Mammary epithelial cell (primary cell): ENCODE measurements at regions of chr16 and their contacts with region 1.

Region 1: DNA sequence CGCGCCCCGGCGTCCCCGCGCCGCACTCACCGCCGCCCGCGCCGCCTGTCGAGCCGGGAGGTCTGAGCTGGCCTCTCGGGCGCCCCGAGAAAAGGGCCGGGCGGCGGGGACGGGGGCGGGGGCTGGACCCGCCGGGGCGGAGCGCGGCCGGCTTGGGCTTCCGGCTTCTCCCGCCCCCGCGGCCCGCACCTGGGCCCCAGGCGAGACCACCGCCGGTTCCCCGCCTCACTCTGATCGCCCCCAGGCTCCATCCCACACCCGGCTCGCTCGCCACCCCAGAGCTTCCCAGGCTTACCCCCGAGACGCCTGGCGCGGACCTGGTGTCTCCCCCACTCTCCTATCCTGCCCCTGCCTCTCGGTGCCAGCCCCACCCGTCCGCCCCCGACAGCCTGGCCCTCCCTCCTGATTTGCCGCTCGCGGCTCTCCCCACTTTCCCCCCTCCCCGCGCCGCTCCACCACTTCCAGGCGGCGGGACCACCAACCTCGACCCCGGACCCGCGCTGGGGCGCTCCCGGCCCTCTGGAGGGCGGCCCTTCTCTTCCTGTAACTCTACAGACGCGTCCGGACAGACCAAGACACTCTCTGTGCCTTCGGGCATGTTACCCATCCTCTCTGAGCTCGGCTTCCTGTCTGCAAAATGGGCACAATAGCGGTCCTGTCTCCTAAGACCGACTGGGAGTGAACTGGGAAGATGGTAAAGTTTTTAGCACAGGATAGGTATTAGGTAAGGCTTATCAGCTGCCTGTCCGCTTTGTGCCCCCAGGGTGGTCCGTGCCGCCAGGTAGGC is at the start of gene LITAF:
- DNase-seq: peak; percentile 74
- H3K4me3 ChIP-seq: peak within 1 kb of the TSS; percentile 72 to 88 (median 84)
- H3K27ac ChIP-seq: peak within 1 kb of the TSS; percentile 83
- H3K4me1 ChIP-seq: peaks cover 30% of the 10 kb centered on the region
- H3K27me3 ChIP-seq: no peaks in the 10 kb centered on the region
- CTCF ChIP-seq: peak in 1 of 2 donors; percentile 27
- total RNA-seq, gene LITAF: 128 to 197 TPM

Region 2: GRCh38 chr16:11407047-11407982 is 179.7 kb before region 1 on chr16:
- CTCF ChIA-PET with region 1: no interaction called
- dilution Hi-C with region 1: no loop called
- in situ Hi-C with region 1: no loop called
- intact Hi-C with region 1: loop called (anchors 5 kb)
- DNase-seq: peak; percentile 65
- H3K4me3 ChIP-seq: no peak overlapping the region
- H3K27ac ChIP-seq: no peak overlapping the region
- H3K4me1 ChIP-seq: no peaks in the 10 kb centered on the region
- H3K27me3 ChIP-seq: no peaks in the 10 kb centered on the region
- CTCF ChIP-seq: peak; percentile 76 to 77

Region 3: GRCh38 chr16:11535471-11535870 is 51.6 kb before region 1 on chr16:
- CTCF ChIA-PET with region 1: no interaction called
- dilution Hi-C with region 1: no loop called
- in situ Hi-C with region 1: no loop called
- intact Hi-C with region 1: loop called (anchors 2 kb)
- DNase-seq: peak; percentile 82
- H3K4me3 ChIP-seq: no peak overlapping the region
- H3K27ac ChIP-seq: no peak overlapping the region
- H3K4me1 ChIP-seq: peaks cover 12% of the 10 kb centered on the region
- H3K27me3 ChIP-seq: no peaks in the 10 kb centered on the region
- CTCF ChIP-seq: no peak

Region 4: GRCh38 chr16:11613381-11614303 is 26.6 kb after region 1 on chr16:
- CTCF ChIA-PET with region 1: no interaction called
- dilution Hi-C with region 1: no loop called
- in situ Hi-C with region 1: no loop called
- intact Hi-C with region 1: loop called (anchors 1 kb)
- DNase-seq: peak; percentile 94
- H3K4me3 ChIP-seq: no peak overlapping the region
- H3K27ac ChIP-seq: no peak overlapping the region
- H3K4me1 ChIP-seq: peaks cover 42% of the 10 kb centered on the region
- H3K27me3 ChIP-seq: no peaks in the 10 kb centered on the region
- CTCF ChIP-seq: no peak

Region 5: GRCh38 chr16:11629071-11629962 is 42.3 kb after region 1 on chr16:
- CTCF ChIA-PET with region 1: no interaction called
- dilution Hi-C with region 1: no loop called
- in situ Hi-C with region 1: no loop called
- intact Hi-C with region 1: loop called (anchors 5 kb)
- DNase-seq: no peak
- H3K4me3 ChIP-seq: no peak overlapping the region
- H3K27ac ChIP-seq: peak overlapping the region; percentile 88
- H3K4me1 ChIP-seq: peaks cover 44% of the 10 kb centered on the region
- H3K27me3 ChIP-seq: no peaks in the 10 kb centered on the region
- CTCF ChIP-seq: no peak

Region 6: GRCh38 chr16:11667824-11668622 is 81.0 kb after region 1 on chr16 and contains the start of gene SNN:
- CTCF ChIA-PET with region 1: no interaction called
- dilution Hi-C with region 1: no loop called
- in situ Hi-C with region 1: no loop called
- intact Hi-C with region 1: no loop called
- DNase-seq: peak; percentile 79
- H3K4me3 ChIP-seq: peak within 1 kb of the TSS; percentile 65 to 90 (median 85)
- H3K27ac ChIP-seq: no peak within 1 kb of the TSS
- H3K4me1 ChIP-seq: peaks cover 49% of the 10 kb centered on the region
- H3K27me3 ChIP-seq: no peaks in the 10 kb centered on the region
- CTCF ChIP-seq: no peak
- total RNA-seq, gene SNN: 14.2 to 32.7 TPM

Region 7: DNA sequence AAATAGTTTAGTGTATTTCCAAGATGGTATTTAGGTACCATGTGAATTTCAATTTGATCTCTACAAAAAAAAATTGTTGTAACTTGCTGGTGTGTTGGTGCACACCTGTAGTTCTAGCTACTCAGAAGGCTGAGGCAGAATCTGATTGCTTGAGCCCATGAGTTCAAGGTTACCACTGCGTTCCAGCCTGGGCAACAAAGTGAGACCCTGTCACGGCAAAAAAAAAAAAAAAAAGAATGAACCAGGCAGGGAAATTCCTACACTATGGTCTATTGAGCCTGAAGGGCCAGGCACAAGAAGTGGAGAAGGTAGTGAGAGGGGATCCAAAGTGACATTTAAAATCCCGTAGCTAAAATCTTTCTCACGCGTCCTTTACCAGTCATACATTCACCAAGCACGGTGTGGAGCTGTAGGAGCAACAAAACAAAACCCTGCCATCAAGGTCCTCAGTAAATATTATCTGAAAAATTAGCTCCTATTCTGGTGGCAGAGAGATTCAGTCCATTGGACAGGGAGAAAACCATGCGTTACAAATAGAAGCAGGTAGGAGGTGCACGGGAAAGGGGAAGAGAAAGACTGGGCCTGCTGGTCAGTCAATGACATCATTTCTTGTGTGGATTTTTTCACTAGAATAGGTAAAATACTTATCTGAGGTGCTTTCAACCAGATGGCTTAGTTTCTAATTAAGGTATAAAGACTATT is 128.3 kb after region 1 on chr16:
- CTCF ChIA-PET with region 1: no interaction called
- dilution Hi-C with region 1: no loop called
- in situ Hi-C with region 1: no loop called
- intact Hi-C with region 1: loop called (anchors 10 kb)
- DNase-seq: no peak
- H3K4me3 ChIP-seq: no peak overlapping the region
- H3K27ac ChIP-seq: no peak overlapping the region
- H3K4me1 ChIP-seq: no peaks in the 10 kb centered on the region
- H3K27me3 ChIP-seq: no peaks in the 10 kb centered on the region
- CTCF ChIP-seq: no peak